ENCODE measurements at regions of chr16 and their contacts with region 1.

Region 1: DNA sequence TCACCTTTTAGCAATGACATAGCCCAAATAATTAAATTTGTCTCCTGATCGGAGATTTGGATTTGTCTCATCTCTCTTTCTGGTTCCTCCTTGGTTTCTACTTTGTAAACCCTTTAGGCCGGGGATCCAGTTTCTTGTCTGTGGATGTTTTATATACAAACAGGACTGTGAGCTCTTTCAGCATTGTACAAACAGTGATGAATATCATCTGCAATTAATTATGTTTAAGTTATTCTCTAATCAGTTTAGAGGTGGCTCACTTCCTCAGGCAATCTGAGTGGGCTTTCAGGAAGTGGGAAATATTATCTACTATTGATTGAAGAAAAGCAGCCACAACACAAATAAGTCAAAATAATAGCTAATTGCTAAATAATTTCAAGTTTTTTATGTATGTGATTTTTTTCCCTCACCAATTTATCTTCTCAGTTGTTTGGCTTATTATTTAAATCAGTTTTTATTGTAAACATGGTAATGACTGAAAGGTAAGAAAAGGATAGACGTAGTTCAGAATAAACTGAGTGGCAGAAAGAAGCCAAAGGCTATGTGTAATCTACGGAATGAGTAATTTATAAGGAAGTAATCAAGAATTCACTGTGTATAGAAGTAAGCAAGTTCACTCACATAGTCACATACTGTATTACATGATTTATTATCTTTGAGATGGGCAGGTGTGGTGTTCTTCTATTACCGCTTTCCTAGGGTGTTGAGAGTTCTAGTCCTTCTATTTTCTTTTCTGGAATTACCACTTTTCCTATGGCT is 3.4 kb upstream of the ABCC11 start:
- DNase-seq: no peak
- ATAC-seq: no peak
- H3K4me3 ChIP-seq: no peak overlapping the region
- H3K4me3 Mint-ChIP-seq: no peak overlapping the region
- H3K27ac ChIP-seq: no peak overlapping the region
- H3K27ac Mint-ChIP-seq: no peak overlapping the region
- H3K4me1 ChIP-seq: peaks cover 37% of the 10 kb centered on the region
- H3K4me1 Mint-ChIP-seq: peaks cover 63% of the 10 kb centered on the region
- H3K27me3 ChIP-seq: no peaks in the 10 kb centered on the region
- H3K27me3 Mint-ChIP-seq: no peaks in the 10 kb centered on the region
- CTCF ChIP-seq: no peak

Region 2: GRCh38 chr16:48542020-48542473 is 291.3 kb after region 1 on chr16:
- CTCF ChIA-PET with region 1: no interaction called
- POLR2A ChIA-PET with region 1: no interaction called
- intact Hi-C with region 1: loop called in 1 of 2 experiments (anchors 10 kb)
- DNase-seq: peak in 3 of 9 experiments; percentile 37 to 51 (median 47)
- ATAC-seq: peak; percentile 49
- H3K4me3 ChIP-seq: no peak overlapping the region
- H3K4me3 Mint-ChIP-seq: no peak overlapping the region
- H3K27ac ChIP-seq: no peak overlapping the region
- H3K27ac Mint-ChIP-seq: no peak overlapping the region
- H3K4me1 ChIP-seq: peaks cover 9% of the 10 kb centered on the region
- H3K4me1 Mint-ChIP-seq: peaks cover 11% of the 10 kb centered on the region
- H3K27me3 ChIP-seq: no peaks in the 10 kb centered on the region
- H3K27me3 Mint-ChIP-seq: no peaks in the 10 kb centered on the region
- CTCF ChIP-seq: peak; percentile 14

Measured in CD8-positive, alpha-beta T cell (primary cell).